ENCODE measurements at regions of chr20 and their contacts with region 1.

Region 1: DNA sequence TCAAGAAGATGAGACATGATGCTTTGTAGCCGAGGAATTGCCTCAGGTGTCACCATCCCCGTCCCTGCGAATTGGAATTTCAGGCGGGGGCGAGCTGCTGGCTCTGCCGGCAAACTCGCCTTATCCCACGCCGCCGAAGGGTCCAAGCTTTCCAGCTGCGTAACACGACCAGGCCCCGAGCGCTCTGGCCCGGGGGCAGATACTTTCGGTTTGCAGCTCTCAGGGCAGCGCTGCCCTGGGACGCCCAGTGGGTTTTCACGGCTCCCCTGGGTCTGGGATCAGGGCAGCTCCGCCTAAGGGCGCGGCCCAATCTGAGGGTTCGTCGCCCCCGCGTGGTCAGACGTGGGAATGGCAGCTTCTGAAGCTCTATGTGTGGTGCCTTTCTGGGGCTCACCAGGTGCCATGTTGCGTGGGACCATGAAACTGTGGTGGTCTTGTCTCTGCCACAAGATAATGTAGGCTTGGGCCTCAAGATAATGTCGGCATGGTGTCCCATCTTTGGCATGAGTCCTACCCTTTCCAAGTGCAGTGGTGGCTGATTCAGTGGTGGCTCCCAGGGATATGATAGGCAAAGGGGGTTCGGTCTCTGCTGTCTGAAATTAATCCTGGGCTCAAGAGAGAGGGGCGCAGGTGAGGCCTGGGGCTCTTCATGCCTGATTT is 20.9 kb downstream of the PIGT start:
- DNase-seq: peak; percentile 97
- H3K4me3 Mint-ChIP-seq: peak overlapping the region; percentile 89
- H3K27ac Mint-ChIP-seq: peak overlapping the region; percentile 43
- H3K4me1 Mint-ChIP-seq: peaks cover 4% of the 10 kb centered on the region
- H3K27me3 Mint-ChIP-seq: no peaks in the 10 kb centered on the region
- CTCF ChIP-seq: peak; percentile 97

Region 2: GRCh38 chr20:45322952-45323383 is 113.9 kb before region 1 on chr20:
- CTCF ChIA-PET with region 1: interaction called, 141 read pairs
- intact Hi-C with region 1: loop called (anchors 1 kb)
- DNase-seq: peak; percentile 70
- H3K4me3 Mint-ChIP-seq: peak overlapping the region; percentile 6
- H3K27ac Mint-ChIP-seq: peak overlapping the region; percentile 5
- H3K4me1 Mint-ChIP-seq: peaks cover 21% of the 10 kb centered on the region
- H3K27me3 Mint-ChIP-seq: peaks cover 17% of the 10 kb centered on the region
- CTCF ChIP-seq: peak; percentile 65

Region 3: GRCh38 chr20:45362804-45363610 is 73.9 kb before region 1 on chr20 and contains the start of gene SYS1:
- CTCF ChIA-PET with region 1: interaction called, 38 read pairs
- intact Hi-C with region 1: no loop called
- DNase-seq: peak; percentile 100
- H3K4me3 Mint-ChIP-seq: peak within 1 kb of the TSS; percentile 91
- H3K27ac Mint-ChIP-seq: peak within 1 kb of the TSS; percentile 92
- H3K4me1 Mint-ChIP-seq: peaks cover 59% of the 10 kb centered on the region
- H3K27me3 Mint-ChIP-seq: no peaks in the 10 kb centered on the region
- CTCF ChIP-seq: peak; percentile 94
- total RNA-seq, gene SYS1: 42.1 and 45.5 TPM in 2 replicates

Region 4: DNA sequence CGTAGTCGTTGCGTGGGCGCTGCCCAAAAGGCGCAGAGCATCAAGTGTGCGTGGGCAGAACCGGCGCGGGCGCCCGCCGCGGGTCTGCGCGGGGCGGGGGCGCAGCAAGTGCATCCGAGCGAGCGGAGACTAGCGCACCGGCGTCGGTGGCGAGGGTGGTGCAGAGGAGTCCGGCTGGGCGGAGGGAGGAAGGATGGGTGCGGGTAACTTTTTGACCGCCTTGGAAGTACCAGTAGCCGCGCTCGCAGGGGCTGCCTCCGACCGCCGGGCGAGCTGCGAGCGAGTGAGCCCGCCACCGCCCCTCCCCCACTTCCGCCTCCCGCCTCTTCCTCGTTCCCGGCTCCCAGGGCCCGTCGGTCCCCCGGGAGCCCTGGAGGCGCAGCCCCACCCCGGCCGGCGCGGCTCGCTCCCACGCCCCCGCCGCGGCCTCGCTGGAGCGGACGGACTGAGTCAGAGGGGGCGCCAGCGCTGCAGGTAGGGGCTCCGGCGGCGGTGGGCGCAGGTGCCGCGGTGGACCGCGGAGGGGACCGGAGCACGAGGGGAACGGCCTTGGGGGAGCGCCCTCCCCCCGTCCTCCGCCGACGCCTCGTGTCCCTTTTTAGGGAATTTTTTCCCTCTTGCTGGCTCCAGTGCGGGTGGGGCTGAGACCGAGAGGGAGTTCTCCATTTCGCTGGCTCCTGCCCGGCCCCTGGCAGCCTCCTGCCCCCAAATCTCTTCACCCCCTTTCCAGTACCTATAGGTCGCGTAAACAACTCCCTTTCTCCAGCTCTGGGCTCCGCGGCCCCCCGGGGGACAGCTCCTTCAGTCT is 30.4 kb before region 1 on chr20:
- CTCF ChIA-PET with region 1: interaction called, 14 read pairs
- intact Hi-C with region 1: no loop called
- DNase-seq: peak; percentile 84
- H3K4me3 Mint-ChIP-seq: peak overlapping the region; percentile 86
- H3K27ac Mint-ChIP-seq: peak overlapping the region; percentile 72
- H3K4me1 Mint-ChIP-seq: peaks cover 30% of the 10 kb centered on the region
- H3K27me3 Mint-ChIP-seq: no peaks in the 10 kb centered on the region
- CTCF ChIP-seq: no peak

Region 5: GRCh38 chr20:45450097-45450818 is 13.4 kb after region 1 on chr20:
- CTCF ChIA-PET with region 1: interaction called, 13 read pairs
- intact Hi-C with region 1: no loop called
- DNase-seq: peak; percentile 41
- H3K4me3 Mint-ChIP-seq: no peak overlapping the region
- H3K27ac Mint-ChIP-seq: no peak overlapping the region
- H3K4me1 Mint-ChIP-seq: peaks cover 33% of the 10 kb centered on the region
- H3K27me3 Mint-ChIP-seq: peaks cover 48% of the 10 kb centered on the region
- CTCF ChIP-seq: peak; percentile 88